Activated T-helper 1 cell treated with anti-CD3 and anti-CD28 coated beads, Interleukin-12 subunit alpha, Interleukin-12 subunit beta, Interleukin-2, Interleukin-4 antibody, amounts not matched to agents 30 ng/mL and 10 ng/mL and 1 ng/mL, durations not matched to agents 14 hours and 24 hours and 36 hours (primary cell): ENCODE measurements at regions of chr2 and their contacts with region 1.

Region 1: GRCh38 chr2:169824373-169825333 is at the start of gene METTL5:
- DNase-seq: peak; percentile 79
- H3K4me3 Mint-ChIP-seq: peak within 1 kb of the TSS; percentile 93
- H3K27ac Mint-ChIP-seq: peak within 1 kb of the TSS; percentile 89
- H3K4me1 Mint-ChIP-seq: peaks cover 50% of the 10 kb centered on the region
- H3K27me3 Mint-ChIP-seq: no peaks in the 10 kb centered on the region
- total RNA-seq, gene METTL5: 92.0 and 92.1 TPM in 2 replicates

Region 2: GRCh38 chr2:169109502-169110409 is 714.9 kb before region 1 on chr2:
- intact Hi-C with region 1: loop called (anchors 5 kb)
- DNase-seq: peak; percentile 58
- H3K4me3 Mint-ChIP-seq: no peak overlapping the region
- H3K27ac Mint-ChIP-seq: no peak overlapping the region
- H3K4me1 Mint-ChIP-seq: peaks cover 52% of the 10 kb centered on the region
- H3K27me3 Mint-ChIP-seq: peaks cover 3% of the 10 kb centered on the region

Region 3: DNA sequence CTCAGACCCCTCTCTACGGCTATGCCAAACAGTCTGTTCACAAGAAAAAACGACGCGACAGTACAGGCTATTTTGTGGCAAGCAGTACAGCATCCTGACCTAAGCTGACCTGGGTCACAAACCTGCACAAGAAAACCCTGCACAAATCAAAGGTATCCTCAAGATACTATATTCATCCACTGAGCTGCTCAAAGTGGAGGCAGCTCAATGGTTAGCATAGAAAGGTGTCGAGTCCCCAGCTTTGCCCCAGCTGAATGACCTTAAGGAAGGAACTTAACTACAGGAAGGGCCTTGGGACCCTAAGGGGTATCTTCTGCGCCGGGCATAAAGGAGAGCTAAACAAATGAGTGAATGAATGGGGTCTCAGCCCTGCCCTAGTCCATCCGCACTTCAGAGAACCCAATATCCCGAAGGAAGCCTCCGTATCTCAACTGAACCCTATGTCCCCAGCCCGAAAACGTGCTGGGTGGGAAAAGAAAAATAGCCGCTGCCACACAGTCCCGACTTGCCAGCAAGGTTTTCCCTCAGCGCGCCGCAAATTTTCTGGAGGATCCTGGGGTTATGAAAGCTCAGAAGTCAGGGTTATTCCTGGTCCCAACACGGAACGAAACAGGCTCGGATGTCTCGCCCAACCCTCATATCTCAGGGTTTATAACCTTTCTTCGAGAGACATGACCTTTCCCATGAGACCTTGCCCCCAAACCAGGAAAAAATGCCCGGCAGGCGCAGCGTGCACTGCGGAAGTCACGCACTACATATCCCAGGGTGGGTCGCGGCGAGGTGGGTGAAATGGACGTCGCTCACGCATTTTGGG is 251.3 kb before region 1 on chr2 and contains the start of gene FASTKD1:
- intact Hi-C with region 1: loop called (anchors 1 kb)
- DNase-seq: peak; percentile 82
- H3K4me3 Mint-ChIP-seq: peak within 1 kb of the TSS; percentile 99
- H3K27ac Mint-ChIP-seq: peak within 1 kb of the TSS; percentile 90
- H3K4me1 Mint-ChIP-seq: peaks cover 32% of the 10 kb centered on the region
- H3K27me3 Mint-ChIP-seq: no peaks in the 10 kb centered on the region
- total RNA-seq, gene FASTKD1: 50.3 and 50.4 TPM in 2 replicates

Region 4: GRCh38 chr2:169694113-169694903 is 130.3 kb before region 1 on chr2 and contains the starts of genes CFAP210 and PHOSPHO2:
- intact Hi-C with region 1: loop called (anchors 1 kb)
- DNase-seq: peak; percentile 98
- H3K4me3 Mint-ChIP-seq: peak within 1 kb of the TSS; percentile 88
- H3K27ac Mint-ChIP-seq: peak within 1 kb of the TSS; percentile 88
- H3K4me1 Mint-ChIP-seq: peaks cover 9% of the 10 kb centered on the region
- H3K27me3 Mint-ChIP-seq: peaks cover 17% of the 10 kb centered on the region
- total RNA-seq, gene CFAP210: not detected in 2 replicates
- total RNA-seq, gene PHOSPHO2: 4.5 and 4.6 TPM in 2 replicates

Region 5: GRCh38 chr2:169798718-169799592 is 25.7 kb before region 1 on chr2 and contains the start of gene SSB:
- intact Hi-C with region 1: loop called (anchors 1 kb)
- DNase-seq: peak; percentile 89
- H3K4me3 Mint-ChIP-seq: peak within 1 kb of the TSS; percentile 93
- H3K27ac Mint-ChIP-seq: peak within 1 kb of the TSS; percentile 89
- H3K4me1 Mint-ChIP-seq: peaks cover 32% of the 10 kb centered on the region
- H3K27me3 Mint-ChIP-seq: peaks cover 10% of the 10 kb centered on the region
- total RNA-seq, gene SSB: 101 and 107 TPM in 2 replicates

Region 6: GRCh38 chr2:169862816-169863215 is 38.2 kb after region 1 on chr2:
- intact Hi-C with region 1: no loop called
- DNase-seq: no peak
- H3K4me3 Mint-ChIP-seq: no peak overlapping the region
- H3K27ac Mint-ChIP-seq: no peak overlapping the region
- H3K4me1 Mint-ChIP-seq: no peaks in the 10 kb centered on the region
- H3K27me3 Mint-ChIP-seq: no peaks in the 10 kb centered on the region

Region 7: GRCh38 chr2:169928463-169928864 is 103.8 kb after region 1 on chr2:
- intact Hi-C with region 1: loop called (anchors 1 kb)
- DNase-seq: no peak
- H3K4me3 Mint-ChIP-seq: no peak overlapping the region
- H3K27ac Mint-ChIP-seq: no peak overlapping the region
- H3K4me1 Mint-ChIP-seq: no peaks in the 10 kb centered on the region
- H3K27me3 Mint-ChIP-seq: no peaks in the 10 kb centered on the region